ENCODE measurements at regions of chr12 and their contacts with region 1.

Region 1: GRCh38 chr12:89051065-89051677 is 301.1 kb downstream of the DUSP6 start:
- DNase-seq: peak; percentile 24
- H3K4me3 Mint-ChIP-seq: no peak overlapping the region
- H3K27ac Mint-ChIP-seq: no peak overlapping the region
- H3K4me1 Mint-ChIP-seq: peaks cover 22% of the 10 kb centered on the region
- H3K27me3 Mint-ChIP-seq: no peaks in the 10 kb centered on the region

Region 2: DNA sequence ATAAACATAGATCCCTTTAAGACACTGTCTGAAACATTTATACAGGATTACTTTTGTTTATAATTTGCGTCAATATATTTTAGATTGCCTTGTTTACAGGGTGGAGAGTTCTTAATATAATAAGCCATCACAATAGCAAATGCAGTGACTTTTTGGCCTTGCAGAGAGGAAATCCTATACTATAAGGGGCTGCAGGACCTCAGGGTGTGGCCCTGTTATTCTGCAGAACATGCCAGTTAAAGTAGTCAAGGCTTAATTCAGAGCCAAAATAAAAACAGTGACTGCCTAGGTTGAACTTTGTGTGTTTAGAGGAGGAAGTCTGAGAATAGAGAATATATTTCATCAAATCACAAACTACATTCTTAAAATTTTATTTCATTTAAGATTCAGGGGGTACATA is 80.4 kb before region 1 on chr12:
- CTCF ChIA-PET with region 1: no interaction called
- DNase-seq: no peak
- H3K4me3 Mint-ChIP-seq: no peak overlapping the region
- H3K27ac Mint-ChIP-seq: no peak overlapping the region
- H3K4me1 Mint-ChIP-seq: no peaks in the 10 kb centered on the region
- H3K27me3 Mint-ChIP-seq: no peaks in the 10 kb centered on the region

Region 3: GRCh38 chr12:88985475-88986030 is 65.6 kb before region 1 on chr12:
- CTCF ChIA-PET with region 1: no interaction called
- DNase-seq: no peak
- H3K4me3 Mint-ChIP-seq: no peak overlapping the region
- H3K27ac Mint-ChIP-seq: no peak overlapping the region
- H3K4me1 Mint-ChIP-seq: no peaks in the 10 kb centered on the region
- H3K27me3 Mint-ChIP-seq: peaks cover 5% of the 10 kb centered on the region

Region 4: GRCh38 chr12:88998421-88998820 is 52.8 kb before region 1 on chr12:
- CTCF ChIA-PET with region 1: no interaction called
- DNase-seq: no peak
- H3K4me3 Mint-ChIP-seq: no peak overlapping the region
- H3K27ac Mint-ChIP-seq: no peak overlapping the region
- H3K4me1 Mint-ChIP-seq: no peaks in the 10 kb centered on the region
- H3K27me3 Mint-ChIP-seq: peaks cover 12% of the 10 kb centered on the region

Region 5: GRCh38 chr12:89029961-89030360 is 21.2 kb before region 1 on chr12:
- CTCF ChIA-PET with region 1: no interaction called
- DNase-seq: no peak
- H3K4me3 Mint-ChIP-seq: no peak overlapping the region
- H3K27ac Mint-ChIP-seq: no peak overlapping the region
- H3K4me1 Mint-ChIP-seq: peaks cover 28% of the 10 kb centered on the region
- H3K27me3 Mint-ChIP-seq: no peaks in the 10 kb centered on the region

Region 6: GRCh38 chr12:89352492-89353187 is 301.5 kb after region 1 on chr12 and contains the start of gene DUSP6:
- CTCF ChIA-PET with region 1: interaction called, 12 read pairs
- DNase-seq: peak; percentile 98
- H3K4me3 Mint-ChIP-seq: peak within 1 kb of the TSS; percentile 99
- H3K27ac Mint-ChIP-seq: peak within 1 kb of the TSS; percentile 97
- H3K4me1 Mint-ChIP-seq: peaks cover 56% of the 10 kb centered on the region
- H3K27me3 Mint-ChIP-seq: peaks cover 7% of the 10 kb centered on the region